MCF 10A (cell line): ENCODE measurements at regions of chr6 and their contacts with region 1.

Region 1: GRCh38 chr6:112443179-112444065 is 96.3 kb downstream of the RFPL4B start:
- DNase-seq: peak; percentile 68
- H3K4me3 Mint-ChIP-seq: no peak overlapping the region
- H3K27ac Mint-ChIP-seq: no peak overlapping the region
- H3K4me1 Mint-ChIP-seq: peaks cover 16% of the 10 kb centered on the region
- H3K27me3 Mint-ChIP-seq: no peaks in the 10 kb centered on the region
- CTCF ChIP-seq: no peak

Region 2: GRCh38 chr6:112117554-112117953 is 325.9 kb before region 1 on chr6:
- CTCF ChIA-PET with region 1: no interaction called
- POLR2A ChIA-PET with region 1: no interaction called
- intact Hi-C with region 1: no loop called
- DNase-seq: peak; percentile 26
- H3K4me3 Mint-ChIP-seq: no peak overlapping the region
- H3K27ac Mint-ChIP-seq: peak overlapping the region; percentile 60
- H3K4me1 Mint-ChIP-seq: peaks cover 12% of the 10 kb centered on the region
- H3K27me3 Mint-ChIP-seq: no peaks in the 10 kb centered on the region
- CTCF ChIP-seq: no peak

Region 3: GRCh38 chr6:112337209-112337638 is 106.2 kb before region 1 on chr6:
- CTCF ChIA-PET with region 1: interaction called, 3 read pairs
- POLR2A ChIA-PET with region 1: no interaction called
- intact Hi-C with region 1: loop called (anchors 10 kb)
- DNase-seq: peak; percentile 77
- H3K4me3 Mint-ChIP-seq: no peak overlapping the region
- H3K27ac Mint-ChIP-seq: no peak overlapping the region
- H3K4me1 Mint-ChIP-seq: peaks cover 3% of the 10 kb centered on the region
- H3K27me3 Mint-ChIP-seq: no peaks in the 10 kb centered on the region
- CTCF ChIP-seq: peak; percentile 70

Region 4: DNA sequence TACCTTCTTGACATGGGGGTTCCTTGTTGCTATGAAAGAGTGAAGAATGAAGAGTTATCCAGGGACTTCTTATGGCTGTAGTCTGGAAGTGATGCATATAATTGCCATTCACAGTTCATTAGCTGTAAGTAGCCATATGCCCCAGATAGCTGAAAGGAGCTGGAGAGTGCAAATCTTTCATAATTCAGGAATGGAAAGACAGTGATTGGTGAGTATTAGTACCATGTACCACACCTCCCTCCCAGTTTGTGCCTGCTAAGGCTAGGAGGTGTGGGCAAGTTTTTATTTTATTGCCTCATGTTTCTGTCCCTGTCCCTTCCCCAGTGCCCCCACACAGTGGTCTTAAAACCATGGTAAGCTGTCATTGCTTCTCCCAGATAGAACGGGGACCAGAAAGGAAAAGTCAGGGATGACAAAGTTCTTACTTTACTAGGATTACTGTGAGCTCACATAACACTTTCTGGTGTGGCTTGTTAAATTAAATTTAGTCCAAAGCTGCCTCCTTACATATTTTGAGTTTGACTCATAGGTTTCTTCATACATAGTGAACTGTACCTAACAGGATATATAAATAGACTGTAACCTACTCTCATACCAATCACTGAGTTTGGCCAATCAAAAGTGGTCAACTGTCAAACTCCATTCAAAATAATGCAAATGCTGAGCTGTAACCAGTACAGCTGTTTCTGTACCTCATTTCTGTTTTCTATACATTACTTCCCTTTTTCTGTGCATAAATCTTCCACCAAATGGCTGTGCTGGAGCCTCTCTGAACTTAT is 23.1 kb after region 1 on chr6:
- CTCF ChIA-PET with region 1: no interaction called
- POLR2A ChIA-PET with region 1: interaction called, 15 read pairs
- intact Hi-C with region 1: no loop called
- DNase-seq: peak; percentile 59
- H3K4me3 Mint-ChIP-seq: peak overlapping the region; percentile 32
- H3K27ac Mint-ChIP-seq: peak overlapping the region; percentile 73
- H3K4me1 Mint-ChIP-seq: peaks cover 31% of the 10 kb centered on the region
- H3K27me3 Mint-ChIP-seq: no peaks in the 10 kb centered on the region
- CTCF ChIP-seq: no peak